Stomach (tissue), 19 donors: ENCODE measurements at regions of chr12 and their contacts with region 1.

Region 1: GRCh38 chr12:3202734-3203446 is 125.7 kb downstream of the TSPAN9 start:
- DNase-seq: peak; percentile 56 to 80
- H3K4me3 ChIP-seq: no peak overlapping the region
- H3K27ac ChIP-seq: no peak overlapping the region
- H3K4me1 ChIP-seq: peaks cover 29 to 56% (median 46%) of the 10 kb centered on the region in 4 donors
- H3K27me3 ChIP-seq: peaks cover 0 to 48% (median 26%) of the 10 kb centered on the region in 3 donors
- CTCF ChIP-seq: peak in 5 of 7 experiments; percentile 86 to 96 (median 93)
- EP300 ChIP-seq: no peak
- POLR2A ChIP-seq: no peak

Region 2: GRCh38 chr12:3135522-3136461 is 67.1 kb before region 1 on chr12:
- intact Hi-C with region 1: loop called (anchors 10 kb)
- DNase-seq: peak in 1 of 2 donors; percentile 90
- H3K4me3 ChIP-seq: no peak overlapping the region
- H3K27ac ChIP-seq: no peak overlapping the region
- H3K4me1 ChIP-seq: peaks cover 16 to 52% (median 28%) of the 10 kb centered on the region in 4 donors
- H3K27me3 ChIP-seq: peaks cover 0 to 3% (median 0%) of the 10 kb centered on the region in 3 donors
- CTCF ChIP-seq: peak in 5 of 7 experiments; percentile 58 to 85 (median 81)
- EP300 ChIP-seq: no peak
- POLR2A ChIP-seq: no peak

Region 3: GRCh38 chr12:3293446-3294161 is 90.7 kb after region 1 on chr12:
- intact Hi-C with region 1: no loop called
- DNase-seq: no peak
- H3K4me3 ChIP-seq: no peak overlapping the region
- H3K27ac ChIP-seq: no peak overlapping the region
- H3K4me1 ChIP-seq: peaks cover 0 to 17% (median 10%) of the 10 kb centered on the region in 4 donors
- H3K27me3 ChIP-seq: peaks cover 0 to 31% (median under 1%) of the 10 kb centered on the region in 3 donors
- CTCF ChIP-seq: no peak
- EP300 ChIP-seq: no peak
- POLR2A ChIP-seq: no peak

Region 4: GRCh38 chr12:3491938-3492792 is 289.3 kb after region 1 on chr12:
- intact Hi-C with region 1: no loop called
- DNase-seq: peak; percentile 31 to 94
- H3K4me3 ChIP-seq: peak overlapping the region in 1 of 4 donors; percentile 3
- H3K27ac ChIP-seq: no peak overlapping the region
- H3K4me1 ChIP-seq: peaks cover 11 to 32% (median 24%) of the 10 kb centered on the region in 4 donors
- H3K27me3 ChIP-seq: peaks cover 23 to 93% (median 70%) of the 10 kb centered on the region in 3 donors
- CTCF ChIP-seq: no peak
- EP300 ChIP-seq: no peak
- POLR2A ChIP-seq: no peak